Activated T-helper 1 cell treated with anti-CD3 and anti-CD28 coated beads, Interleukin-12 subunit alpha, Interleukin-12 subunit beta, Interleukin-2, Interleukin-4 antibody, amounts not matched to agents 30 ng/mL and 10 ng/mL and 1 ng/mL, durations not matched to agents 14 hours and 24 hours and 36 hours (primary cell): ENCODE measurements at regions of chr10 and their contacts with region 1.

Region 1: GRCh38 chr10:31340343-31340742 is 21.3 kb downstream of the ZEB1 start:
- DNase-seq: no peak
- H3K4me3 Mint-ChIP-seq: no peak overlapping the region
- H3K27ac Mint-ChIP-seq: no peak overlapping the region
- H3K4me1 Mint-ChIP-seq: no peaks in the 10 kb centered on the region
- H3K27me3 Mint-ChIP-seq: no peaks in the 10 kb centered on the region

Region 2: GRCh38 chr10:30694518-30695228 is 645.7 kb before region 1 on chr10:
- intact Hi-C with region 1: loop called (anchors 2 kb)
- DNase-seq: no peak
- H3K4me3 Mint-ChIP-seq: peak overlapping the region; percentile 49
- H3K27ac Mint-ChIP-seq: peak overlapping the region; percentile 82
- H3K4me1 Mint-ChIP-seq: peaks cover 56% of the 10 kb centered on the region
- H3K27me3 Mint-ChIP-seq: no peaks in the 10 kb centered on the region

Region 3: GRCh38 chr10:31353574-31353973 is 13.2 kb after region 1 on chr10:
- intact Hi-C with region 1: loop called (anchors 1 kb)
- DNase-seq: no peak
- H3K4me3 Mint-ChIP-seq: no peak overlapping the region
- H3K27ac Mint-ChIP-seq: peak overlapping the region; percentile 85
- H3K4me1 Mint-ChIP-seq: peaks cover 37% of the 10 kb centered on the region
- H3K27me3 Mint-ChIP-seq: no peaks in the 10 kb centered on the region

Region 4: DNA sequence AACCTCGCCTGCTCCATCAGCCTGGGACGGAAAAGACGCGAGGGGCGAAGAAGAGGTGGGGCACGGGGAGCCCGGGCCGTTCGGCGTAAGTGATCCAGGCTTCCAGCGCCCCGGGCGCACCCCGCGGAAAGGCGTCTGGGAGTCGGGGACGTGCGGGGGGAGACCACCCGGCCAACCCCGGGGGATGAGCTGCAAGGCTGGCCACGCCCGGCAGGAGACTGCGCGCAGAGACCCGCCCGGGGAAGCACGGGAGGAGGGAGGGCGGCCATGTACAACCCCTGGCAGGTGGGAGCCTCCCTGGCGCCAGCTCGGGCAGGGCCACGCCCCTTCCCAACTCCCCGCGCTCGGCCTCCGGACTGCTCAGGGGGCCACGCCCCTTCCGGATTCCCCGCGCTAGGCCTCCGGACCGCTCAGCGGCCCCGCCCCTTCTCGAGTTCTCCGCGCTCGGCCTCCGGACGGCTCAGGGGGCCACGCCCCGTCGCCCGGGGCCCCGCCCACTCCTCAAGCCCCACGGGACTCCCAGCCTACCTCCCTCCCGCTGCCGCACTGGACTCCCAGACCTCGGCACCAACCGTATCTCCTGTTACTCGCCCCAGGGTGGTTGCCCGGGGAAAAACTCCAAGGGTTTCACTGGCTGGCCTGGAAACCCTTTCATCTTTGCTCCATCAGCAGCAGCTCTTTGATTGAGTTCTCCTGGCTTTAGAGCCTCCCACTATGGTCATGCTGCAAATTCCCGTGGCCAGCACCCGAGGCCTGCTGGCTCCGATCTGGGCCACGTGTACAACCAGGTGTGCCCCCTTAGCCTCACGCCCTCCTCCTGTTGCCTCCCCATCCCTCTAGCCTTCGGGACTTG is 263.1 kb after region 1 on chr10:
- intact Hi-C with region 1: loop called (anchors 10 kb)
- DNase-seq: peak; percentile 82
- H3K4me3 Mint-ChIP-seq: peak overlapping the region; percentile 80
- H3K27ac Mint-ChIP-seq: no peak overlapping the region
- H3K4me1 Mint-ChIP-seq: peaks cover 29% of the 10 kb centered on the region
- H3K27me3 Mint-ChIP-seq: peaks cover 6% of the 10 kb centered on the region